ENCODE measurements at regions of chr15 and their contacts with region 1.

Region 1: GRCh38 chr15:25438601-25439368 is at the start of gene UBE3A:
- DNase-seq: peak; percentile 74 to 95 (median 86)
- ATAC-seq: peak; percentile 92
- H3K4me3 ChIP-seq: peak within 1 kb of the TSS; percentile 70 to 89
- H3K4me3 Mint-ChIP-seq: peak within 1 kb of the TSS; percentile 94
- H3K27ac ChIP-seq: peak within 1 kb of the TSS; percentile 77 to 90
- H3K27ac Mint-ChIP-seq: peak within 1 kb of the TSS; percentile 95
- H3K4me1 ChIP-seq: peaks cover 35% of the 10 kb centered on the region
- H3K4me1 Mint-ChIP-seq: peaks cover 47% of the 10 kb centered on the region
- H3K27me3 ChIP-seq: no peaks in the 10 kb centered on the region
- H3K27me3 Mint-ChIP-seq: no peaks in the 10 kb centered on the region
- CTCF ChIP-seq: no peak
- total RNA-seq, gene UBE3A: 133 to 138 TPM

Region 2: GRCh38 chr15:24956111-24956838 is 482.5 kb before region 1 on chr15:
- CTCF ChIA-PET with region 1: no interaction called
- POLR2A ChIA-PET with region 1: interaction called, 8 read pairs
- intact Hi-C with region 1: loop called (anchors 2 to 5 kb)
- DNase-seq: peak; percentile 52 to 87 (median 77)
- ATAC-seq: peak; percentile 80
- H3K4me3 ChIP-seq: peak overlapping the region; percentile 81 to 85
- H3K4me3 Mint-ChIP-seq: peak overlapping the region; percentile 94
- H3K27ac ChIP-seq: peak overlapping the region; percentile 89 to 90
- H3K27ac Mint-ChIP-seq: peak overlapping the region; percentile 96
- H3K4me1 ChIP-seq: peaks cover 14% of the 10 kb centered on the region
- H3K4me1 Mint-ChIP-seq: peaks cover 28% of the 10 kb centered on the region
- H3K27me3 ChIP-seq: no peaks in the 10 kb centered on the region
- H3K27me3 Mint-ChIP-seq: no peaks in the 10 kb centered on the region
- CTCF ChIP-seq: no peak

Region 3: GRCh38 chr15:25368850-25369249 is 69.9 kb before region 1 on chr15:
- CTCF ChIA-PET with region 1: no interaction called
- POLR2A ChIA-PET with region 1: no interaction called
- intact Hi-C with region 1: loop called in 1 of 2 experiments (anchors 5 kb)
- DNase-seq: no peak
- ATAC-seq: no peak
- H3K4me3 ChIP-seq: no peak overlapping the region
- H3K4me3 Mint-ChIP-seq: no peak overlapping the region
- H3K27ac ChIP-seq: no peak overlapping the region
- H3K27ac Mint-ChIP-seq: no peak overlapping the region
- H3K4me1 ChIP-seq: no peaks in the 10 kb centered on the region
- H3K4me1 Mint-ChIP-seq: peaks cover 33% of the 10 kb centered on the region
- H3K27me3 ChIP-seq: no peaks in the 10 kb centered on the region
- H3K27me3 Mint-ChIP-seq: no peaks in the 10 kb centered on the region
- CTCF ChIP-seq: no peak

Region 4: DNA sequence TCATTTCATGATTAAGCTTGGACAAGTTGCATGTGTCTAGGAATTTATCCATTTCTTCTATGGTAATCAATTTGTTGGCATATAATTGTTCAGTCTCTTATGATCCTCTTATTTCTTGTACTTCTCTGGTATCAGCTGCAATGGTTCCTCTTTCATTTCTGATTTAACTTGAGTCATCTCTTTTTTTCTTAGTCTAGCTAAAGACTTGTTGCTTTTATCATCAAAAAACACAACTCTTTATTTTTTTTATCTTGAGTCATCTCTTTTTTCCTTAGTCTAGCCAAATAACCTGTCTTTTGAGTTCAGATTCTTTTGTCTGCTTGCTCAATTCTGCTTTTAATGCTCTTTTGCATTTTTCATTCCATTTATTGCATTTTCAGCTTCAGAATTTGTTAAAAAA is 37.3 kb before region 1 on chr15:
- CTCF ChIA-PET with region 1: no interaction called
- POLR2A ChIA-PET with region 1: no interaction called
- intact Hi-C with region 1: loop called in 1 of 2 experiments (anchors 5 kb)
- DNase-seq: no peak
- ATAC-seq: no peak
- H3K4me3 ChIP-seq: no peak overlapping the region
- H3K4me3 Mint-ChIP-seq: no peak overlapping the region
- H3K27ac ChIP-seq: no peak overlapping the region
- H3K27ac Mint-ChIP-seq: no peak overlapping the region
- H3K4me1 ChIP-seq: no peaks in the 10 kb centered on the region
- H3K4me1 Mint-ChIP-seq: peaks cover 26% of the 10 kb centered on the region
- H3K27me3 ChIP-seq: no peaks in the 10 kb centered on the region
- H3K27me3 Mint-ChIP-seq: no peaks in the 10 kb centered on the region
- CTCF ChIP-seq: no peak

Region 5: DNA sequence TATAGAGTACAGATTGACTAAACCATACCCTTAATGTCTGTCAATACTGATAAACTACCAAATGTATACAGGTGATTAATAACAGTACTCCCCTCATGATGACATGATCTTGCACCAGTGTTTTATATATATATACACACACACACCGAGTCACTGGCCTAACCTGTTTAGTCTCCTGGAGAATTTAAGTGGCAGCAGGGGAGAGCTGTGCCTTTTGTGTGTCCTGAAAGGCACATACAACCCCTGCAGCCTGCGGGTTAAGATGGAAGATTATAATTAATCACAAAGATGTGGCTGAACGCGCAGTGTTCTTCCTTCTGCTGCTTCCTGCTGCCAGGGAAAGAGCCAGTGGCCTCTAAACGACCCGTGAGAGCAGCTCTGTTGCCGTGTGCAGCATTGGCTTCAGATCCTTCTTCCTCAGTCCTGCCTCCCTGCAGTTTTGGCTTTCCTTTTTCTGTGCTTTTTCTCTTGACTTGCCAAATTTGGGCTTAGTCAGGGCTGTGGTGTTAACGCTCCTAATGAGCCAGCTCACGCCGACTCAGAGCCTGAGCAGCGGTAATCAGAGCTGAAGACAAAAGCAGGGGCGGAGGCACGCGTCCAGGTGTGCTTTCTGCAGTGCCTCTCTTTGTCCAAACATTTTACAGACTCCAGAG is 42.5 kb after region 1 on chr15:
- CTCF ChIA-PET with region 1: no interaction called
- POLR2A ChIA-PET with region 1: no interaction called
- intact Hi-C with region 1: no loop called
- DNase-seq: no peak
- ATAC-seq: no peak
- H3K4me3 ChIP-seq: no peak overlapping the region
- H3K4me3 Mint-ChIP-seq: no peak overlapping the region
- H3K27ac ChIP-seq: no peak overlapping the region
- H3K27ac Mint-ChIP-seq: no peak overlapping the region
- H3K4me1 ChIP-seq: no peaks in the 10 kb centered on the region
- H3K4me1 Mint-ChIP-seq: no peaks in the 10 kb centered on the region
- H3K27me3 ChIP-seq: no peaks in the 10 kb centered on the region
- H3K27me3 Mint-ChIP-seq: peaks cover 6% of the 10 kb centered on the region
- CTCF ChIP-seq: no peak

Region 6: DNA sequence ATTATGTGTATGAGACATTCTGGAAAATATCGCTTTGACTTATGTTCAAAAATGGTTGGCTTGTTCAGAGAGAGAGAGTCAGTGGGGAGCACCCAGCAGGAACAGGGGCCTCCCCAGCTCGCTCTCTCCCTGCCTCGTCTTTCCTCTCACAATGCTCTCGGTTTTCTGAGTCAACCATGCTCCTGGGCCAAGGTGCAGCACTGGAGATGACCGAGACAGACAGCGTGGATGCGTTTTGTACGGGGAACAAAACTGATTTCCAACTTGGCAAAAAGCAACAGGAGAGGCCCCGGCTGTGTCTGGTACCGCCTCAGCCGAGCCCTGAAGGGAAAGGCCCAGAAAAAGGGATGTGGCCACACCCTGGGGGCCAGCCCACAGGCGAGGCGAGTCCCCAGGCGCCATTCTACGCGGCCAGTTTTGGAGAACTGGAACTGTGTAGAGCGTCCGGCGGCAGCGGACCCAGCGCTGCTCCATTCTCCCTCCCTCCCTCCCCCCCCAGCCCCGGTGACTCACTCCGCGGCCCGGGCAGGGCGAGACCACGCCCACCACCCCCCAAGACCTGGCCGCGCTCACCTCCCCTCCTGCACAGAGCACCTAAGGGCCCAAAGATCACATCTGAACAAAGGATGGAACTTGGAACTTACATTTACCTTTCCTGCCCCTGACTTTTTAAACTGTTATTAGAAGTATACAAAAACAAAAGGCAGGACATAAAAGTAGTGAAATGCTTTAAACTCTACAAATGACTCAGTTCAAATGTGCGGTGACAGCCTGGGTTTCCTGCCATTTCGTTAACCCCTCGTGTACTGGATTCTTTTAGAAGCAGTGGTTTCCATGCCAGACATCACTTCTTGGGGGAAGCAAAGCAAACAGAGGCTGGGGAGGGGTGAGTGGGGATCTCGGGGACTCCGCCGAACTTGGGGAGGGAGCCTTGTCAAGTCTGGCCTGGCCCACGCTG is 411.6 kb after region 1 on chr15:
- CTCF ChIA-PET with region 1: no interaction called
- POLR2A ChIA-PET with region 1: interaction called, 3 read pairs
- intact Hi-C with region 1: loop called in 1 of 2 experiments (anchors 5 kb)
- DNase-seq: peak in 8 of 9 experiments; percentile 63 to 86 (median 74)
- ATAC-seq: peak; percentile 54
- H3K4me3 ChIP-seq: peak overlapping the region; percentile 45 to 53
- H3K4me3 Mint-ChIP-seq: peak overlapping the region; percentile 91
- H3K27ac ChIP-seq: peak overlapping the region; percentile 72 to 88
- H3K27ac Mint-ChIP-seq: peak overlapping the region; percentile 98
- H3K4me1 ChIP-seq: peaks cover 80% of the 10 kb centered on the region
- H3K4me1 Mint-ChIP-seq: peaks cover 86% of the 10 kb centered on the region
- H3K27me3 ChIP-seq: no peaks in the 10 kb centered on the region
- H3K27me3 Mint-ChIP-seq: no peaks in the 10 kb centered on the region
- CTCF ChIP-seq: no peak

Region 7: DNA sequence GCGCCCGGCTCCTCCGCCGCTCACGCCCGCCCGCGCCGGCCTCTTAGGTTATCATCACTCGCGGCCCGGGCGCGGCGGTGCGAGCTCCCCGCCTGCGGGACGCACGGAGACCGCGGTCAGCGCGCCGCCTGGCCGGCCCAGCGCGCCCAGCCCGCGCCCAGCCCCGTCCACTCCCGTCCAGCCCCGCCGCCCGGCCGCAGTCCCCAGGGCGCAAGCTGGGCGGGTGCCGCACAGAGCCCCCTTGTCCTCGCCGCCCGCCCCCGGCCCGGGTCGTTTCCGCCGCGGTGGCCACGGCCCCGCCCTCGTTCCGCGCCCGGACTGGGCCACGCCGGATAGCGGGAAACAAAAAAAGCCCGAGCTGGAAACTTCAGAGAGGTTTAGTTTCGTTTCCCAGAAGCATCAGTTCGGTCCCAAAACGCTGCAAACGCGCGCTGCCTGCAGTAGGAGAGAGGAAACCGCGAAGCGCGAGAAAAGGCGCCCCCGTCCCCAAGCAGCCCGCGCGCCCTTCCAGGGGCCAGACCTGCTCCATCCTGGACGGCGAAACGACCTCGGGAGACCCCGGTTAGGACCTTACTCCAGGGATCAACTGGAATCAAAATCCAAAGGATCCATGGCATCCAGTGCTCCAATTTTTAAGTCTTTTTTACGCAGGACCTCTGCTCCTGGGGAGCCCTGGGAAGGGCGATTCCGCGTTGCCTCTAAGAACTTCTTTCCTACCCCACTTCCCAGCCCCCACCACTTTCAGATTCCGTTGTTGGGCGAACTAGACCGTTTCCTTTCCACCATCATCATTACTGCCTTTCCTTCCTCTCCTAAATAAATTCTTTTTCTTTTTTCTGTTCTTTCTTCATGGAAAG is 424.6 kb after region 1 on chr15 and contains the start of gene ATP10A:
- CTCF ChIA-PET with region 1: no interaction called
- POLR2A ChIA-PET with region 1: no interaction called
- intact Hi-C with region 1: loop called in 1 of 2 experiments (anchors 5 kb)
- DNase-seq: peak in 6 of 9 experiments; percentile 44 to 73 (median 55)
- ATAC-seq: no peak
- H3K4me3 ChIP-seq: peak within 1 kb of the TSS; percentile 82 to 90
- H3K4me3 Mint-ChIP-seq: peak within 1 kb of the TSS; percentile 95
- H3K27ac ChIP-seq: peak within 1 kb of the TSS; percentile 67 to 86
- H3K27ac Mint-ChIP-seq: peak within 1 kb of the TSS; percentile 98
- H3K4me1 ChIP-seq: peaks cover 30% of the 10 kb centered on the region
- H3K4me1 Mint-ChIP-seq: peaks cover 36% of the 10 kb centered on the region
- H3K27me3 ChIP-seq: no peaks in the 10 kb centered on the region
- H3K27me3 Mint-ChIP-seq: no peaks in the 10 kb centered on the region
- CTCF ChIP-seq: no peak
- total RNA-seq, gene ATP10A: 17.6 to 18.5 TPM

Region 8: GRCh38 chr15:26082221-26083109 is 643.7 kb after region 1 on chr15:
- CTCF ChIA-PET with region 1: no interaction called
- POLR2A ChIA-PET with region 1: no interaction called
- intact Hi-C with region 1: loop called (anchors 1 to 2 kb)
- DNase-seq: peak; percentile 86 to 96 (median 94)
- ATAC-seq: peak; percentile 96
- H3K4me3 ChIP-seq: peak overlapping the region; percentile 74 to 81
- H3K4me3 Mint-ChIP-seq: peak overlapping the region; percentile 91
- H3K27ac ChIP-seq: peak overlapping the region; percentile 70 to 71
- H3K27ac Mint-ChIP-seq: peak overlapping the region; percentile 94
- H3K4me1 ChIP-seq: peaks cover 14% of the 10 kb centered on the region
- H3K4me1 Mint-ChIP-seq: peaks cover 48% of the 10 kb centered on the region
- H3K27me3 ChIP-seq: no peaks in the 10 kb centered on the region
- H3K27me3 Mint-ChIP-seq: peaks cover under 1% of the 10 kb centered on the region
- CTCF ChIP-seq: no peak